ENCODE measurements at regions of chr10 and their contacts with region 1.

Region 1: GRCh38 chr10:114694752-114695151 is 36.7 kb upstream of the ABLIM1 start:
- DNase-seq: peak; percentile 62
- H3K4me3 ChIP-seq: no peak overlapping the region
- H3K27ac ChIP-seq: no peak overlapping the region
- H3K4me1 ChIP-seq: peaks cover 15% of the 10 kb centered on the region
- H3K27me3 ChIP-seq: no peaks in the 10 kb centered on the region
- CTCF ChIP-seq: peak; percentile 54 to 70
- POLR2A ChIP-seq: no peak

Region 2: DNA sequence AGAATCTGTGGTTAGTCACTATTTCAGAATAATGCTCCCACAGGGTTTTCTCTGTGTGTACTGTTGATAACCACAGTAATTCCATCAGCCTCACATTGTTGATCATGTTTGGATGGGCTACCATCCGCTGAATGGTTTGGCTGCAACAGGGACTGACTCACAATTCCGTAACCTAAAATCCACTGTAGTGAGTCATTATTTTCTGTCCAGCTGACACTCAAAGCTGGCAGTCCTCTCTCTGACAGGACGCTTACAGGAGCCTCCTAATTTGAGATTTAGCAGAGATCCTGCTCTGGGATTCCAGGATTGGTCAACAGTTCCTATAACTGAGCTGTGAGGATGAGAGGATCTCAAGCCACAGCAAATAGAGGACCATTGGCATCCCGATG is 423.0 kb before region 1 on chr10:
- CTCF ChIA-PET with region 1: no interaction called
- POLR2A ChIA-PET with region 1: no interaction called
- dilution Hi-C with region 1: no loop called
- intact Hi-C with region 1: no loop called
- DNase-seq: peak; percentile 76
- H3K4me3 ChIP-seq: no peak overlapping the region
- H3K27ac ChIP-seq: no peak overlapping the region
- H3K4me1 ChIP-seq: peaks cover 7% of the 10 kb centered on the region
- H3K27me3 ChIP-seq: no peaks in the 10 kb centered on the region
- CTCF ChIP-seq: no peak
- POLR2A ChIP-seq: no peak

Region 3: GRCh38 chr10:114374053-114374791 is 320.5 kb before region 1 on chr10:
- CTCF ChIA-PET with region 1: no interaction called
- POLR2A ChIA-PET with region 1: no interaction called
- dilution Hi-C with region 1: no loop called
- intact Hi-C with region 1: loop called (anchors 10 kb)
- DNase-seq: peak; percentile 36
- H3K4me3 ChIP-seq: no peak overlapping the region
- H3K27ac ChIP-seq: no peak overlapping the region
- H3K4me1 ChIP-seq: peaks cover 21% of the 10 kb centered on the region
- H3K27me3 ChIP-seq: peaks cover 22 to 40% of the 10 kb centered on the region in 2 experiments
- CTCF ChIP-seq: no peak
- POLR2A ChIP-seq: no peak

Region 4: GRCh38 chr10:114631666-114632417 is 62.9 kb before region 1 on chr10:
- CTCF ChIA-PET with region 1: interaction called, 11 read pairs
- POLR2A ChIA-PET with region 1: no interaction called
- dilution Hi-C with region 1: no loop called
- intact Hi-C with region 1: no loop called
- DNase-seq: peak; percentile 60
- H3K4me3 ChIP-seq: peak overlapping the region; percentile 56 to 75 (median 71)
- H3K27ac ChIP-seq: no peak overlapping the region
- H3K4me1 ChIP-seq: peaks cover 39% of the 10 kb centered on the region
- H3K27me3 ChIP-seq: no peaks in the 10 kb centered on the region
- CTCF ChIP-seq: no peak
- POLR2A ChIP-seq: no peak

Region 5: GRCh38 chr10:114708717-114709335 is 14.1 kb after region 1 on chr10:
- CTCF ChIA-PET with region 1: interaction called, 21 read pairs
- POLR2A ChIA-PET with region 1: no interaction called
- dilution Hi-C with region 1: no loop called
- intact Hi-C with region 1: no loop called
- DNase-seq: peak; percentile 67
- H3K4me3 ChIP-seq: no peak overlapping the region
- H3K27ac ChIP-seq: no peak overlapping the region
- H3K4me1 ChIP-seq: peaks cover 12% of the 10 kb centered on the region
- H3K27me3 ChIP-seq: no peaks in the 10 kb centered on the region
- CTCF ChIP-seq: no peak
- POLR2A ChIP-seq: no peak

Region 6: GRCh38 chr10:115129752-115130151 is 435.0 kb after region 1 on chr10:
- CTCF ChIA-PET with region 1: interaction called, 3 read pairs
- POLR2A ChIA-PET with region 1: no interaction called
- dilution Hi-C with region 1: no loop called
- intact Hi-C with region 1: loop called (anchors 5 kb)
- DNase-seq: peak; percentile 46
- H3K4me3 ChIP-seq: no peak overlapping the region
- H3K27ac ChIP-seq: no peak overlapping the region
- H3K4me1 ChIP-seq: no peaks in the 10 kb centered on the region
- H3K27me3 ChIP-seq: no peaks in the 10 kb centered on the region
- CTCF ChIP-seq: no peak
- POLR2A ChIP-seq: no peak

Measured in endothelial cell of umbilical vein (primary cell).